Prostate gland (tissue), 2 donors: ENCODE measurements at regions of chr4 and their contacts with region 1.

Region 1: GRCh38 chr4:74932816-74933561 is at the start of gene PARM1:
- DNase-seq: peak; percentile 95
- H3K4me3 ChIP-seq: peak within 1 kb of the TSS; percentile 86 to 91
- H3K27ac ChIP-seq: peak within 1 kb of the TSS; percentile 94
- H3K4me1 ChIP-seq: no peaks in the 10 kb centered on the region
- H3K27me3 ChIP-seq: no peaks in the 10 kb centered on the region
- CTCF ChIP-seq: peak; percentile 86 to 97 (median 90)
- POLR2A ChIP-seq: peak; percentile 91
- total RNA-seq, gene PARM1: 105 to 133 TPM

Region 2: GRCh38 chr4:75048208-75048879 is 115.4 kb after region 1 on chr4:
- intact Hi-C with region 1: loop called (anchors 5 kb)
- DNase-seq: no peak
- H3K4me3 ChIP-seq: no peak overlapping the region
- H3K27ac ChIP-seq: no peak overlapping the region
- H3K4me1 ChIP-seq: no peaks in the 10 kb centered on the region
- H3K27me3 ChIP-seq: no peaks in the 10 kb centered on the region
- CTCF ChIP-seq: no peak
- POLR2A ChIP-seq: no peak

Region 3: GRCh38 chr4:75289914-75290582 is 357.1 kb after region 1 on chr4:
- intact Hi-C with region 1: loop called (anchors 2 kb)
- DNase-seq: peak; percentile 60
- H3K4me3 ChIP-seq: no peak overlapping the region
- H3K27ac ChIP-seq: peak overlapping the region in 1 of 2 donors; percentile 29
- H3K4me1 ChIP-seq: no peaks in the 10 kb centered on the region
- H3K27me3 ChIP-seq: no peaks in the 10 kb centered on the region
- CTCF ChIP-seq: peak in 1 of 4 experiments; percentile 61
- POLR2A ChIP-seq: no peak

Region 4: GRCh38 chr4:75490155-75490554 is 557.2 kb after region 1 on chr4:
- intact Hi-C with region 1: loop called (anchors 5 kb)
- DNase-seq: no peak
- H3K4me3 ChIP-seq: no peak overlapping the region
- H3K27ac ChIP-seq: no peak overlapping the region
- H3K4me1 ChIP-seq: no peaks in the 10 kb centered on the region
- H3K27me3 ChIP-seq: no peaks in the 10 kb centered on the region
- CTCF ChIP-seq: peak in 3 of 4 experiments; percentile 33 to 58 (median 37)
- POLR2A ChIP-seq: no peak

Region 5: DNA sequence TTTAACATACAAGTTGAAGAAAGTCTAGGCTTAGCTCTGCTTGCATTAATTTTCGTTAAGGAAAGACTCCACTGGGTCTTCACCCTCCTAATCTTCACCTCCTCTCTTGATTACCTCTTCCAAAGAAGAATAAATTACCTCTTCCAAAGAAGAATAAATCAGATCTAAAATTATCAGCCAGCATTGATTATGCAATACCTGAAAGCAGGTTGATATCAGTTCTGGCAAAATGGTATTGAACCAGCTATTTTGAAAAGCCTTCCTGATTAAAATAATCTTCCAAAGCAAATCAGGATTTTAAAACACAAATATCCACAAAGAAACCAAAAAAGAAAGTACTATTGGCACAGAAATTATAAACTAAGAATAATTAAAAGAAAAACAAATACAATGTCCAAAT is 660.4 kb after region 1 on chr4:
- intact Hi-C with region 1: no loop called
- DNase-seq: no peak
- H3K4me3 ChIP-seq: no peak overlapping the region
- H3K27ac ChIP-seq: no peak overlapping the region
- H3K4me1 ChIP-seq: no peaks in the 10 kb centered on the region
- H3K27me3 ChIP-seq: no peaks in the 10 kb centered on the region
- CTCF ChIP-seq: no peak
- POLR2A ChIP-seq: no peak